GM18951 (cell line): ENCODE measurements at regions of chrX and their contacts with region 1.

Region 1: DNA sequence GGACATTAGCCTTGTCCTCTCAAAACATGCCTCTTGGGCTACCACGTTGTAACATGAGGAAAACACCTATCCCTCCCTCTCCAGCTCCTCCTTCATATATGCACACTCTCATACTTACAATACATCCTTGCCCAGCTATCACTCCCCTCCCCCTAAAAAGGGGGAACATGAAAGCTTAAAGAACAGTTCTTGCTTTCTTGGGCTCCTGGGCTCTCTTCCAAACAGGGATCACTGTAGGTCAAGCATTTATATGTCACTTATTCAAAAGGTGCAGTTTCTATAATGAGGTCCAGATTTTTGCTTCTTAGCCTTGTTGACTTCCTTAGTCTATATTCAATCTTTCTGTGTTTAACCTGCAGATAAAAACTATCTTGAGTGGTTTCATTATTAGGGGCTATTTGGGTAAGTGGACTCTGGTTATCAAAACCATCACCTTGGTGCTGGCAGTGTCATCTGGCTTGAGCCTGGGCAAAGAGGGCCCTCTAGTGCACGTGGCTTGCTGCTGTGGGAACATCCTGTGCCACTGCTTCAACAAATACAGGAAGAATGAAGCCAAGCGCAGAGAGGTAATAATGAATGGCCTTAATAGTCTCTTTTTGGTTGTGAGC is 119.4 kb downstream of the AKAP4 start:
- POLR2A ChIP-seq: no peak

Region 2: GRCh38 chrX:49915361-49916222 is 165.8 kb before region 1 on chrX:
- in situ Hi-C with region 1: loop called (anchors 10 kb)
- POLR2A ChIP-seq: no peak